Mucosa of descending colon (tissue), 3 donors: ENCODE measurements at regions of chr14 and their contacts with region 1.

Region 1: GRCh38 chr14:58637391-58638230 is at the start of gene DACT1:
- DNase-seq: peak; percentile 39 to 71 (median 60)
- ATAC-seq: peak; percentile 72
- H3K4me3 ChIP-seq: peak within 1 kb of the TSS; percentile 34
- H3K4me1 ChIP-seq: peaks cover 11% of the 10 kb centered on the region
- CTCF ChIP-seq: no peak
- total RNA-seq, gene DACT1: 2.3 to 7.2 (median 3.0) TPM

Region 2: GRCh38 chr14:58587271-58587670 is 50.3 kb before region 1 on chr14:
- intact Hi-C with region 1: no loop called
- DNase-seq: no peak
- ATAC-seq: no peak
- H3K4me3 ChIP-seq: no peak overlapping the region
- H3K4me1 ChIP-seq: no peaks in the 10 kb centered on the region
- CTCF ChIP-seq: no peak

Region 3: DNA sequence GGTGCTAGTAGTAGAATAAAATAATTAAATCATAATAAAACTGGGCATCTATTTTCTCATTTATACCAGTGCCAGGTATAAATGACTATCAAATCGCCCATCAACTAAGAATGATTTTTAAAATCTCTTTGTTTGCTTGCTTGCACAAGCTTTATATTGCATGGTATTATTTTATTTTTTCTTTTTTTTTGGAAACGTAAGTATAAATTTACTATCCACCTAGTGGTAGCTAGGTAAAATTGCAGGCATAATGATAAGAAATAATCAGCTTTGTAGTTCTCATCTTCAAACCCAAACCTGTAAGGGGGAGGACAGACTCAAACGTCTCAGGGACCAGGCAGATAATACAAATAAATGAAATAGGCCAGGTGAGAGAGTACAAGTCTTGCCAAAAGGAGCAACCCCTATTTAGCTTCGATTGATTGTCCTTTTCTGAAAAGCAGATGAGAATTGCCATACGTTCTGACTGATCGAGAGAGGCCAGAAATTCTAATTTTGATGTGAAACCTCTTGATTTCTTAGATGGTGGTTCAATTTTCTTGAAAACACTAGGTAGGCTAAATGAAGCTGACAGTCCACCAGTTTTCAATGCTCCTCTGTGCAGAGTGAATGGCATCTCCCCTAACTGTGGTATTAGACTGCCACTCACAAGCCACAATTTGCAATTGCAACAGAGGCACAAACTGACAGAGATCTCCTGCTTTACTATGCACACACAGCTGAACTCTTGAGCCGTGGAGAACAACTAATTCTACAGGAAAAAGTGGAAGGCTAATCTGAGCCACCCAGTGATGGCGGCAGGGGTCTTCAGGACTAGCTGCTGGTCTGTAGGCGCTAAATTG is 189.5 kb after region 1 on chr14:
- intact Hi-C with region 1: loop called in 1 of 2 experiments (anchors 5 kb)
- DNase-seq: no peak
- ATAC-seq: peak; percentile 59
- H3K4me3 ChIP-seq: no peak overlapping the region
- H3K4me1 ChIP-seq: peaks cover 6% of the 10 kb centered on the region
- CTCF ChIP-seq: no peak

Region 4: GRCh38 chr14:59055439-59056045 is 417.9 kb after region 1 on chr14:
- intact Hi-C with region 1: loop called in 1 of 2 experiments (anchors 10 kb)
- DNase-seq: peak in 1 of 3 donors; percentile 67
- ATAC-seq: peak; percentile 67
- H3K4me3 ChIP-seq: no peak overlapping the region
- H3K4me1 ChIP-seq: no peaks in the 10 kb centered on the region
- CTCF ChIP-seq: peak; percentile 56